ENCODE measurements at regions of chr1 and their contacts with region 1.

Region 1: DNA sequence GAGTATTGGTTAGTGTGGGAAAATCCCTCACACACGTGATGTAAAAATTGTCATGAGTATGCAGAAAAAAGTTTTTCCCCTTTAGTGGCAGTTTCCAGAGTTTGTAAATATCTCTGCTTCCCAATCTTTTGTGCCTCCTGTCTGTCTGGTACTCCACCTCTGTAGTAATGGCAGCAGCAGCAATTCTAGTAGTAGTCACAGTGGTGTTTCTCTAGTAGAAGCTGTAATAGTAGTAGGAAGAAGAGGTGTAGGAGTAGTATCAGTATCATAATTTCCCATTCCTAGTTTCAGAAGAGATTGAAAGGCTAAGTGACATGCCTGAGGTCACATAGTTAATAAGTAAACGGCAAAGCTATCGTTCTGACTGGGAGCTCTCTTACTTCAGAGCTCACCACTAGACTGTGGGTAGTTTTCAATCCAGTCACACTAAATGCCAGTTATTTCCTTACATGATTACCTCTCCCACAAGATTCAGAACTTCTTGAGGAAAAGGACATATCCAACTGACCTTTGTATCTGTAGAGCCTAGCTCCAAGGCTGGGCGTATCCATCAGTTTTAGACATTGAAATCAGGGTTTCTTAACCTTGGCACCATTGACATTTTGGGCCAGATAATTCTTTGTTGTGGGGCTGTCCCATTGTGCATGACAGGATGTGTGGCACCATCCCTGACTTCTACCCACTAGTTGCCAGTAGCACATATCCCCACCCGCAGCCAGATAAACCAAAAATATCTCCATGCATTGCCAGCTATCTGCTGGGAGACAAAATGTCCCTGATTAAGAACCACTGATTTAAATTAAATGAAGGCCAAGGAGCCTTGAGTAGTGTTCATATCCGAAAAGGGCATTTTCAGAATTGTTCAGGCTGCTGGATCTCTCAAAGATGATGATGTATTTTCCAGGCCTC is 135.9 kb downstream of the FGGY start:
- DNase-seq: no peak
- H3K4me3 Mint-ChIP-seq: no peak overlapping the region
- H3K27ac Mint-ChIP-seq: peak overlapping the region; percentile 61
- H3K4me1 Mint-ChIP-seq: peaks cover 49% of the 10 kb centered on the region
- H3K27me3 Mint-ChIP-seq: no peaks in the 10 kb centered on the region

Region 2: GRCh38 chr1:59025898-59026426 is 406.8 kb before region 1 on chr1:
- intact Hi-C with region 1: loop called (anchors 5 kb)
- DNase-seq: no peak
- H3K4me3 Mint-ChIP-seq: no peak overlapping the region
- H3K27ac Mint-ChIP-seq: no peak overlapping the region
- H3K4me1 Mint-ChIP-seq: peaks cover 17% of the 10 kb centered on the region
- H3K27me3 Mint-ChIP-seq: no peaks in the 10 kb centered on the region

Region 3: GRCh38 chr1:59143133-59143487 is 289.7 kb before region 1 on chr1:
- intact Hi-C with region 1: loop called (anchors 2 kb)
- DNase-seq: no peak
- H3K4me3 Mint-ChIP-seq: peak overlapping the region; percentile 8
- H3K27ac Mint-ChIP-seq: peak overlapping the region; percentile 62
- H3K4me1 Mint-ChIP-seq: peaks cover 86% of the 10 kb centered on the region
- H3K27me3 Mint-ChIP-seq: no peaks in the 10 kb centered on the region

Region 4: DNA sequence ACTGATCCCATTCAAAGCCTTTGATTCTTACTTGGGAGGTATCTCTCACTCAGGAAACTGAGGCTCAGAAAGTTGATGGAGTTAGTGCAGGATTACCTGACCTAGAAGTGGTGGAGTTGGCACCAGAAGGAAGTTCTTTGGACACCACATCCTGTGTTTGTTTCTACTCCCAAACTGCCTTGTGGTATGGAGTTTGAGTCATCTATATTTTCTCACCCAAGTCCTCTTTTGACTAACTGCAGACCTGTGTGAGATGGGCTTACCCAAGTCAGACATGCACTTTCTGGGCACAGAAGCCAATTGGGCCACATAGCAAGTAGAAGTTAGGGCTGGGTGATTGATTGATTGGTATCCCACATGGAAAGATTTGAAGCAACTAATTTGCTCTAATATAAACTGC is 99.8 kb before region 1 on chr1:
- intact Hi-C with region 1: loop called (anchors 1 kb)
- DNase-seq: peak; percentile 47
- H3K4me3 Mint-ChIP-seq: peak overlapping the region; percentile 15
- H3K27ac Mint-ChIP-seq: peak overlapping the region; percentile 78
- H3K4me1 Mint-ChIP-seq: peaks cover 44% of the 10 kb centered on the region
- H3K27me3 Mint-ChIP-seq: no peaks in the 10 kb centered on the region

Region 5: DNA sequence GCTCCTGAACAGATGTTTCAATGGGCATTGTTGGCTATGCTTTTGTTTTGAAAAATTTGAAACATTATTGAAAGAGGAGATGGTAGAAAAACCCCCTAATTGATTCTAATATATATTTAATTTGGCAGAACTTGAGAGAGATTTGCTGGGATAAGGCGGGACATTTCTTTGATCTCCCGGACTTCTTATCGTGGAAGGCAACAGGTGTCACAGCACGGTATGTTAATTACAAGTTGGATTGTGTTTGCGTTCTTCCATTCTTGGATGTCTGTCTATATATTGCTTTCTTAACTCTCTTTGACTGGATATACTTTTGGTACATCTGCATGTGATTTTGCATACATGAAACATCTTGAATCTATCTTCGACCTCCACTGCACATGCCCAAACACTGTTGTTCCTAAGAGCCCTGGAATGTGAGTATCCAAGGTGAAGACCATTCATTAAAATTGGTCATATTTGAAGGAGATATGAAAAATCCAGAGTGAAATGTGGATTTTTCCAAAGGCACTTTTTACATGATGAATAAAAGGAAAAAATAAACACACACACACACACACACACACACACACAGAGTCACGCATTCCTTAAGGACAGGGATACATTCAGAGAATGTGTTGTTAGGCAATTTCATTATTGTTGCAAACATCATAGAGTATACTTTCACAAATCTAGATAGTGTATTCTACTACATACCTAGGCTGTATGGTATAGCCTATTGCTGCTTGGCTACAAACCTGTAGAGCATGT is 54.0 kb before region 1 on chr1:
- intact Hi-C with region 1: loop called (anchors 2 kb)
- DNase-seq: no peak
- H3K4me3 Mint-ChIP-seq: no peak overlapping the region
- H3K27ac Mint-ChIP-seq: no peak overlapping the region
- H3K4me1 Mint-ChIP-seq: no peaks in the 10 kb centered on the region
- H3K27me3 Mint-ChIP-seq: no peaks in the 10 kb centered on the region

Region 6: GRCh38 chr1:59468828-59469428 is 36.1 kb after region 1 on chr1:
- intact Hi-C with region 1: no loop called
- DNase-seq: no peak
- H3K4me3 Mint-ChIP-seq: no peak overlapping the region
- H3K27ac Mint-ChIP-seq: no peak overlapping the region
- H3K4me1 Mint-ChIP-seq: no peaks in the 10 kb centered on the region
- H3K27me3 Mint-ChIP-seq: peaks cover 3% of the 10 kb centered on the region

Region 7: DNA sequence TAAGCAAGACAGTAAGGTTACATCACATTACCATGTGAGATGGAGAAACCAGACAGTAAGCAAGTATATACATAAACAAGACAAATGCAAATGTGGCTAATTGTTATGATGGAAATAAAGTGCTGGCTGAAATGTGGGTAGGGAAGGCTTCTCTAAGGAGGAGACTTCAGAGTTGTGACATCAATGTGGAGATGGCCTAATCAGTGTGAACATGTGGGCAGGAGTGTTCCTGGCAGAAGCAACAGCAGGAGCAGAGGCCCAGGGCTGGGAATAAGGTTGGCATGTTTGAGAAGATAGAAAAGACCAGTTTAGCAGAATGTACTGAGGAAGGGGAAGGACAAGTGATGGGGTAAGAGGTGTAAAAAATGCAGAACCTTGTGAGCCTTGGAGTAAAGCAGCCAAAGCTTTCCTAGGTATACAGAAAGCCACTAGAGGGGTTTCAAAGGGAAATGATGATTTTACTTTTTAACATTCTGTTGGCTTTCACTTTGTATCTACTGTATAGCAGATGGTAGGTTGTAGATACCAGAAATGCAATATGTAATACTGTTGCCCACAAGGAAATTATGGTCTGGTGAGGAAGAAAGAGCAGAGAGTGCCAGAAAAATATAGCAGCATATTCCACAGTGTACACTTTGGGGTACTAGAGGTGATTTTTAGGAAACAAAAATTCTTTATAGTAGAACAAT is 61.5 kb after region 1 on chr1:
- intact Hi-C with region 1: loop called (anchors 1 kb)
- DNase-seq: no peak
- H3K4me3 Mint-ChIP-seq: no peak overlapping the region
- H3K27ac Mint-ChIP-seq: peak overlapping the region; percentile 86
- H3K4me1 Mint-ChIP-seq: peaks cover 15% of the 10 kb centered on the region
- H3K27me3 Mint-ChIP-seq: peaks cover 3% of the 10 kb centered on the region

Measured in activated T-helper 1 cell treated with anti-CD3 and anti-CD28 coated beads, Interleukin-12 subunit alpha, Interleukin-12 subunit beta, Interleukin-2, Interleukin-4 antibody, amounts not matched to agents 30 ng/mL and 10 ng/mL and 1 ng/mL, durations not matched to agents 14 hours and 24 hours and 36 hours (primary cell).